Vagina (tissue), 2 donors: ENCODE measurements at regions of chr17 and their contacts with region 1.

Region 1: GRCh38 chr17:35540589-35541404 is 3.3 kb upstream of the SLFN12L start:
- DNase-seq: no peak
- H3K4me3 ChIP-seq: peak overlapping the region in 1 of 2 donors; percentile 21
- H3K27ac ChIP-seq: peak overlapping the region; percentile 53
- H3K4me1 ChIP-seq: peaks cover 6% of the 10 kb centered on the region
- H3K27me3 ChIP-seq: no peaks in the 10 kb centered on the region
- CTCF ChIP-seq: no peak
- POLR2A ChIP-seq: no peak

Region 2: GRCh38 chr17:35170968-35171771 is 369.6 kb before region 1 on chr17:
- intact Hi-C with region 1: loop called (anchors 10 kb)
- DNase-seq: peak in 1 of 2 donors; percentile 64
- H3K4me3 ChIP-seq: no peak overlapping the region
- H3K27ac ChIP-seq: no peak overlapping the region
- H3K4me1 ChIP-seq: peaks cover 7% of the 10 kb centered on the region
- H3K27me3 ChIP-seq: no peaks in the 10 kb centered on the region
- CTCF ChIP-seq: peak in 1 of 3 experiments; percentile 32
- POLR2A ChIP-seq: no peak

Region 3: DNA sequence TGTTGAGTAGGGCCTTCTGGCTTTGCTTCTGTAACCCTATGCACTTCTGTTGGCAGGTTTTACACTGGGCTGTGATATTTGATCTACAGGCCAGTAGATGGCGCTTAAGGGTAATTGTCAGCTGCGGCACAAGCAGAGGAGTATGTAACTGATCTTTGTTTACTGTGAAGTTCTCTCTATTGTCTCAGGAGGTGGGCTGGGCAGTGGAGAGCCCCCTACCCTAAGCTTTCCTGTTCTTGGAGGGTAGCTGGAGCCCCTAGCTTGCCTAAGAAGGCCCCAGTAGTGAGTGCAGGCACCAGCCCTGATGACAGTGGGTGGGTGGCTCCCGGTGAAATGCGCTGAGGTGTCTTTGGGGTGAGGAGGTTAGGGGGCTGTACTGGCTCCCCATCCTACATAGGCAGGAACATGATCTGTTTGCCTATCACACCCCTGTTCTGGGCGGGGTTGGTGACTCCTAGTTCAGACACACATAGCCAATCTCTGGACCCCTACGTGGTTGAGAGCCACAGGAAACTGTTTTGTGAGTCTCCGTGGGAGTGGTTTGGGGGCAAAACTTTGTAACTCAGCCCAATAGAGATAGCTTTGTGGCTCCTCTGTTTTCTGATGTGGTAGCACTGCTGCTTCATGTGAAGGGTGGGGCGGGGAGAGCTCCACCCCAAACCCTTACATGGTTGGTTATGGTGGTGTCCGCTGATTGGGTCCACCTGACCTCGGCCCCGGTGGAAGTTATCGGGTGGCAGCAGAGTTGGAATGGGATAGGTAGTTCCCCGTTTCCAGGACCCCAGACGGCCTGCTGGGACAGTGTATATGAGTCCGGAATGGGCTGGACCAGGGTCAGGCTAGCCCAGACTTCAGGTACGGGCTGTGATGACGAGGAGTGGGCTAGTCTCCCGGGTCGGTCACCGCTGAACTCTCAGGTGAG is 227.7 kb before region 1 on chr17:
- intact Hi-C with region 1: loop called (anchors 5 kb)
- DNase-seq: no peak
- H3K4me3 ChIP-seq: peak overlapping the region; percentile 24 to 33
- H3K27ac ChIP-seq: peak overlapping the region; percentile 68
- H3K4me1 ChIP-seq: peaks cover 31% of the 10 kb centered on the region
- H3K27me3 ChIP-seq: no peaks in the 10 kb centered on the region
- CTCF ChIP-seq: peak; percentile 69 to 82 (median 72)
- POLR2A ChIP-seq: no peak

Region 4: DNA sequence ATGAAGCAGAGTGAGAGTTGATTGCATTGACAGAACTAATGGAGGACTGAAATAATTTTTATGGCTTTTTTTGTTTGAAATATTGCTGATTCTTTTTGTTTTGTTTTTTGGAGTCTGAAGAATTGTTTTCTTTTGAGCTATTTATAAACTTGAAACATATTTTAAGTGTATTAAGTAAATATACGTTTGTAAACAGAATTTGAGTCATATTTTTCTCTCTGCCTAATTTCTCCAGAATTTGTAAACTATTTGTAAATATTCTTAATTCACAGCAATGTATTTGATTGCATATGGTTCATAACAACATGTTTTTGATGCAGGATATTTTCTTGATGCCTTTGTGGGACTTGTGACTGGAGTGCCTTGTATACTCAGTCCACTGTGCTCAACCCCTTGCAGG is 218.0 kb before region 1 on chr17:
- intact Hi-C with region 1: loop called (anchors 5 kb)
- DNase-seq: no peak
- H3K4me3 ChIP-seq: no peak overlapping the region
- H3K27ac ChIP-seq: no peak overlapping the region
- H3K4me1 ChIP-seq: no peaks in the 10 kb centered on the region
- H3K27me3 ChIP-seq: no peaks in the 10 kb centered on the region
- CTCF ChIP-seq: no peak
- POLR2A ChIP-seq: no peak